H1 (cell line): ENCODE measurements at regions of chr17 and their contacts with region 1.

Region 1: GRCh38 chr17:28763804-28764266 is 20.0 kb downstream of the TRAF4 start:
- DNase-seq: peak in 1 of 2 experiments; percentile 84
- H3K4me3 ChIP-seq: no peak overlapping the region
- H3K27ac ChIP-seq: no peak overlapping the region
- H3K4me1 ChIP-seq: peaks cover 9 to 25% (median 18%) of the 10 kb centered on the region in 4 experiments
- H3K27me3 ChIP-seq: no peaks in the 10 kb centered on the region
- CTCF ChIP-seq: peak in 2 of 3 experiments; percentile 62 to 81; a peak in 3 of 4 replicates
- EP300 ChIP-seq: no peak
- POLR2A ChIP-seq: no peak
- RAD21 ChIP-seq: peak; percentile 63 to 72

Region 2: GRCh38 chr17:28743225-28744103 is 20.4 kb before region 1 on chr17 and contains the start of gene TRAF4:
- CTCF ChIA-PET with region 1: interaction called, 134 read pairs
- POLR2A ChIA-PET with region 1: interaction called, 240 read pairs
- DNase-seq: peak in 1 of 2 experiments; percentile 87
- H3K4me3 ChIP-seq: peak within 1 kb of the TSS; percentile 94 to 99 (median 98)
- H3K27ac ChIP-seq: peak within 1 kb of the TSS; percentile 99
- H3K4me1 ChIP-seq: peaks cover 0 to 30% (median 24%) of the 10 kb centered on the region in 4 experiments; a peak in 6 of 7 replicates
- H3K27me3 ChIP-seq: no peaks in the 10 kb centered on the region
- CTCF ChIP-seq: peak in 2 of 3 experiments; percentile 8 to 17; a peak in 2 of 4 replicates
- EP300 ChIP-seq: no peak
- POLR2A ChIP-seq: peak; percentile 84 to 94; a peak in 2 of 3 replicates
- RAD21 ChIP-seq: no peak
- total RNA-seq, gene TRAF4: 167 TPM in 2 replicates

Region 3: GRCh38 chr17:28783161-28783560 is 19.3 kb after region 1 on chr17:
- CTCF ChIA-PET with region 1: interaction called, 28 read pairs
- POLR2A ChIA-PET with region 1: interaction called, 10 read pairs
- DNase-seq: no peak
- H3K4me3 ChIP-seq: no peak overlapping the region
- H3K27ac ChIP-seq: no peak overlapping the region
- H3K4me1 ChIP-seq: no peaks in the 10 kb centered on the region
- H3K27me3 ChIP-seq: no peaks in the 10 kb centered on the region
- CTCF ChIP-seq: no peak
- EP300 ChIP-seq: no peak
- POLR2A ChIP-seq: no peak
- RAD21 ChIP-seq: no peak

Region 4: DNA sequence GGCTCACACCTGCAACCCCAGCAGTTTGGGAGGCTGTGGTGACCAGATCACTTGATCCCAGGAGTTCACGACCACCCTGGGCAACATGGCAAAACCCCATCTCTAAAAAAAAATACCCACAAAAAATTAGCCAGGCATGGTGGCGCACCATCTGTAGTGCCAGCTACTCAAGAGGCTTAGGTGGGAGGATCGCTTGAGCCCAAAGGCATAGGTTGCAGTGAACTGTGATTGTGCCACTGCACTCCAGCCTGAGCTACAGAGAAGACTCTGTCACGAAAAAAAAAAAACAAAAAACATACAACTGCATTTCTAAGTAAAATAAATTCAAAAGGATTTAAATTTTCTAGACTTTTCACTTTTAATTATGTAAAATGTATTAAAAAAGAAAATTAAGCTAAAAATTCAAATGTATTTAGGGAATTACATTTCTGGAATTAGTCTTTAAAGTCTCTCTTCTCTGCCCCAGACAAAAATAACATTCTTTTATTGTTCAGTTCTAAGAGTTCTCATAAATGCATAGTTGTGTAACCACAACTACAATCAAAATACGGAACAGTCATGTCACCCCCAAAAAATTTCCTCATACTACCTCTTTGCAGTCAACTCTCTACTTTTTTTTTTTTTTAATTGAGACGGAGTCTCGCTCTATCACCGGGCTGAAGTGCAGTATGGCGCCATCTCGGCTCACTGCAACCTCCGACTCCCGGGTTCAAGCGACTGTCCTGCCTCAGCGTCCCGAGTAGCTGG is 64.6 kb after region 1 on chr17:
- CTCF ChIA-PET with region 1: interaction called, 11 read pairs
- POLR2A ChIA-PET with region 1: interaction called, 4 read pairs
- DNase-seq: no peak
- H3K4me3 ChIP-seq: no peak overlapping the region
- H3K27ac ChIP-seq: no peak overlapping the region
- H3K4me1 ChIP-seq: no peaks in the 10 kb centered on the region
- H3K27me3 ChIP-seq: no peaks in the 10 kb centered on the region
- CTCF ChIP-seq: no peak
- EP300 ChIP-seq: no peak
- POLR2A ChIP-seq: no peak
- RAD21 ChIP-seq: no peak

Region 5: DNA sequence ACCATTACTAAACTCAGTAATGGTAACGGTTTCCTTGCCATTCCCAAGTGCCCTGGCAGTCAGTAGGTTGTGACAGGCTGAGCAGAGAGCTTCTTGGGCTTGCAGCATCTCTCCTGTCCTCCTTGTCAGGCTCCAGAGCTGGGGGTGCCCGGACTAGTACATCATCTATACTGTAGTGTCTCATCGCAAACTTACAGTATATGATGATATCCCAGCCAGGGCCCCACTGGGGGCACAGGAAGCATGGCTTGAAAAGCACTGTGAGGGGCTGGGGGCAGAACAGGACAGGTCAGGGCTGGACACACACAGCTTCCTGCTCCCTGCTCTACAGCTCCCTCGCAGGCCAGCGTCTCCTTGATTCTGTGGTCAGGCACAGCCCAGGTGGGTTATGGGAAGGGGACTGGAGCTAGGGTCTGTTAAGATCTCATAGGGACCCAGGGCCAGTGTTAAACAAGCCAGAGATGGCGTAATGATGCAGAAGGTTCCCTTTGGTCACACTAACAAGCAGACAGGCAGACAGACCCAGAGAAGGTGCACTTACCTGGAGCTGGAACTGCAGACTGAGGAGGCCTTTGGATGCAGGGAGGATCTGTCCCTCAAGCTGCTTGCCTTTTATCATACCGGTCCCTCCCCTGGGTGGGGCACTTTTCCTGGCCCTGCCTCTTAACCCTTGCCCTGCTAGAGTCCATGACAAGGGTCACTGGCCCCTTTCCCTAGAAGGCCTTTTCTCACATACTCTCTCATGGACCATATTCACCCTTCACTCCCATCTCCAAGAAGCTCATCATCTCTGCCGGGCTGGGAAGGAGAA is 97.8 kb after region 1 on chr17:
- CTCF ChIA-PET with region 1: interaction called, 27 read pairs
- POLR2A ChIA-PET with region 1: interaction called, 5 read pairs
- DNase-seq: no peak
- H3K4me3 ChIP-seq: 0 out of 8 replicates have a peak overlapping the region, but pooled peaks of 1 of the 4 experiments have one; percentile 33
- H3K27ac ChIP-seq: no peak overlapping the region
- H3K4me1 ChIP-seq: peaks cover 0 to 6% (median 0%) of the 10 kb centered on the region in 4 experiments; a peak in 2 of 7 replicates
- H3K27me3 ChIP-seq: no peaks in the 10 kb centered on the region
- CTCF ChIP-seq: no peak
- EP300 ChIP-seq: no peak
- POLR2A ChIP-seq: no peak
- RAD21 ChIP-seq: no peak

Region 6: DNA sequence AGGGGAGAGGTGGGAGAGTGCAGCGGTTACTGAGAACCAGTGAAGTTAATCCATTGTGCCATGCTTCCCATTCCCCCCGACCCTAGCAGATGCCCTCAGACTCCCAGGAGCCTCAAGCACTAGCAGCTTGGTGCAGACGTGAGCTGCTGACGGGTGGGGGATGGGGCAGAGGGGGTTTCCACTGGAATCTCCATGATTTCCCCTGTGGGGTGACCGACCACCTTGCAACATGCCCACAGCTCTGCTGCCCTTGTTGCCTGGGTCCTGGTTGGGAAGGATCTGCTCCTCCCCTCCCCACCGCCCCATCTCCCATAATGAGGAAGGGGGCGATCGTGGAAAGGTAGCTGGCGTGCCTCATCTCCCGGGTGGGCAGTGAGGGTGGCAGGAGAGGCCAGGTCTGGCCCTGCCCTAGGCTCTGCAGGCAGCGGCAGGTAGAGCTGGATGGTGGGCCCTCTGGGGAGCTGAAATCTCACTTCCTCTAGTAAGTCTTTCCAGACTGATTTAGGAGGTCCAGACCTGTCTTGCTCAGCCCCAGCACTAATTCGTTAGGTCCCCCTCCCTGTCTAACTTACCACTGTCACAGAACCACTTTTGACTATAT is 124.1 kb after region 1 on chr17:
- CTCF ChIA-PET with region 1: interaction called, 73 read pairs
- POLR2A ChIA-PET with region 1: interaction called, 6 read pairs
- DNase-seq: no peak
- H3K4me3 ChIP-seq: no peak overlapping the region
- H3K27ac ChIP-seq: no peak overlapping the region
- H3K4me1 ChIP-seq: peaks cover 0 to 3% (median under 1%) of the 10 kb centered on the region in 4 experiments; a peak in 3 of 7 replicates
- H3K27me3 ChIP-seq: no peaks in the 10 kb centered on the region
- CTCF ChIP-seq: no peak
- EP300 ChIP-seq: no peak
- POLR2A ChIP-seq: no peak
- RAD21 ChIP-seq: no peak

Region 7: DNA sequence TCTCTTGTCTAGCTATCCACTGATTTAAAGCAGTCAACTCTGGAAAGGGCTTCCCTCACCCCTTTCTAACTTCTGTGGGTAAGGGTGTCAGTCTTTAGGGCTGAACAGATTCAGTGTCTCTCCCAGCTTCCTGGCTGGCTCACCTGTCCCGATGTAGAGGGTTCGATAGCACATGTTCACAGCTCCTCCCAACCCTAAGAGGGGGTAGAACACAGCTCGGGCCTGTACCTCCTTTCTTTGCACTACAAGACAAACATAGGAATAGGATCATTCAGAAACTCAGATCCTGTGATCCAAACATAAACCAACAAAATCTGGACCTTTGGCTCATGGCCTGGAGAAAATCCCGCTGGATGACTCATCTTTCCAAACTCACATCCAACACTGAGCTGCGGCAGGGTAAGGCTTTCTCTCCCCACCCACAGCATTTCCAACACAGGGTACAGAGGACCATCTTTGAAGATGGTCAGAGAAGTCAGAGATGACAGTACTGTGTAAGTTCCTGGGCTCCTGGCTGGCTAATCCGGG is 144.9 kb after region 1 on chr17:
- CTCF ChIA-PET with region 1: interaction called, 25 read pairs
- POLR2A ChIA-PET with region 1: no interaction called
- DNase-seq: no peak
- H3K4me3 ChIP-seq: no peak overlapping the region
- H3K27ac ChIP-seq: no peak overlapping the region
- H3K4me1 ChIP-seq: peaks cover 0 to 6% (median 0%) of the 10 kb centered on the region in 4 experiments; a peak in 5 of 7 replicates
- H3K27me3 ChIP-seq: no peaks in the 10 kb centered on the region
- CTCF ChIP-seq: no peak
- EP300 ChIP-seq: no peak
- POLR2A ChIP-seq: no peak
- RAD21 ChIP-seq: no peak